ENCODE measurements at regions of chr19 and their contacts with region 1.

Region 1: GRCh38 chr19:10259162-10259905 is 7.3 kb downstream of the MRPL4 start:
- DNase-seq: peak; percentile 96
- H3K4me3 Mint-ChIP-seq: no peak overlapping the region
- H3K27ac Mint-ChIP-seq: peak overlapping the region; percentile 72
- H3K4me1 Mint-ChIP-seq: peaks cover 14% of the 10 kb centered on the region
- H3K27me3 Mint-ChIP-seq: no peaks in the 10 kb centered on the region

Region 2: DNA sequence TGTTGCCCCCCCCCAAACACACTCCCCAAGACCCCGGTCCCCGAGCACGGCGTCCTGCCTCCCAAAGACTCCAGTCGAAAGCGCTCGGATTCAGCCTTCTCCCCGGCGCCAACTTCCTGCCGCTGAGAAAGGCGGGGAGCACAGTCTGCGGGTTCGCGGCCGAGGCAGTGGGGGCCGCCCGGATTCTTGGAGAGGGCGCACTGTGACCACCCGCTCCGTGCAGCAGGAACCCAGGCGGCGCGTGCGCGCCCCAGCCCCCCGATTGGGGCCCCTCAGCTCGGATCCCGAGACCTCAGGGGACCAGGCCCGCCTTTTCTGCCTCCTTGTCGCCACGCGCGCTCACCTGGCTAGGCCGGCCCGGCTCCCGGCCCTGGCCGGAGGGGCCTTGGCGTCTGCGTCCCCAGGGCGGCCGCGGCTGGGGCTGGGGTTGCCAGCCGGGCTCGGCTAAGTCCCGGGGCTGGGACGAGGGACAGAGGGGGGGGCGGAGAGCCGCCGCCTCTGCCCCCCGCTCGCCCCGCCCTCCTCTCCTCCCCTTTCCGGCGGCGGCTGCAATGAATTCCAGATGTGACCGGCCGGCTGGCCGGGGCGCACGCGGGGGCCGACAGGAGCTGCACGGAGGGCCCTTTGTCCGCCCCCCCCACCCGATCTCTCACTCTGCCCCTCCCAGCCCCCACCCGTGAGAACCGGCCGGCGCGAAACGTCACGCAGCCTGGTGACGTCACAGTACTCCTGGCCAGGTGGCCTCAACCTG is 28.3 kb before region 1 on chr19 and contains the start of gene S1PR2:
- CTCF ChIA-PET with region 1: no interaction called
- DNase-seq: peak; percentile 75
- H3K4me3 Mint-ChIP-seq: peak within 1 kb of the TSS; percentile 83
- H3K27ac Mint-ChIP-seq: peak within 1 kb of the TSS; percentile 69
- H3K4me1 Mint-ChIP-seq: peaks cover 23% of the 10 kb centered on the region
- H3K27me3 Mint-ChIP-seq: peaks cover 26% of the 10 kb centered on the region

Region 3: DNA sequence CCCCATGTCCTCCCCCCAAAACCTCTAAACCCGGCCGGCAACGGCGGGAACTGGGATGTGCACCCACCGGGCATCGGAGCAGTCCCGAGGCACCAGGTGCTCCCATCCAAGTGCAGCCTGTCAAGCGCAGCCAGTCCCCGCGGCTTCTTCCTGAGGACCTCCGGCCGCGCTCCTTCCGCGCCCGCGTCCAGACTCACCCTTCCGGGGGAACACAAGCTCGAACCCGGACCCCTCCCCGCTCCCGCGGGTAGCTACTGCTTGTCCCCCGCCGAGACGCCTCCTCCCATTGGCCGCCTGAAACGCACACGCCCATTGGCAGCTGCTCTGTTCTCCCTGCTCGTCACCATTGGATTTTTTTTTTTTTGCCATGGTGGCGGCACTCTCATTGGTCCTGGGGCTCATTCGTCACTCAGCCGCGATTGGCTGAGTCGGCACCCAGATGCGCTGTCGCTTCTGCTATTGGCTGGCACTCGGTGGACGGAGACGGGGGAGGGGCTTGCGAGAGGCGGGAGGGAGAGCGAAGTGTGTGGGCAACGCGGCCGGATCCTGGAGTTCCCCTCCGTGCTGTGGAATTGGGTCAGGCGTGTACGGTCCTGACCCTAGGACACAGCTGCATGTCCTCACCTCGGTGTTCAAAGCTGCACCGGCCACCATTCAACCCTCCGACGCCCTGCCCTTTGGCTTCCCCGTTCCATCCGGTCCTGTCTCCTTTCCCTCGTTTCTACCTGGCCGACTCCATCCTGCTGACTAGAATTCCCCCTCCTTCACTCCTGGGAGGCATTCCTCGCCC is 121.2 kb after region 1 on chr19 and contains the start of gene TYK2:
- CTCF ChIA-PET with region 1: interaction called, 140 read pairs
- DNase-seq: peak; percentile 98
- H3K4me3 Mint-ChIP-seq: peak within 1 kb of the TSS; percentile 84
- H3K27ac Mint-ChIP-seq: peak within 1 kb of the TSS; percentile 90
- H3K4me1 Mint-ChIP-seq: peaks cover 29% of the 10 kb centered on the region
- H3K27me3 Mint-ChIP-seq: peaks cover 16% of the 10 kb centered on the region

Region 4: DNA sequence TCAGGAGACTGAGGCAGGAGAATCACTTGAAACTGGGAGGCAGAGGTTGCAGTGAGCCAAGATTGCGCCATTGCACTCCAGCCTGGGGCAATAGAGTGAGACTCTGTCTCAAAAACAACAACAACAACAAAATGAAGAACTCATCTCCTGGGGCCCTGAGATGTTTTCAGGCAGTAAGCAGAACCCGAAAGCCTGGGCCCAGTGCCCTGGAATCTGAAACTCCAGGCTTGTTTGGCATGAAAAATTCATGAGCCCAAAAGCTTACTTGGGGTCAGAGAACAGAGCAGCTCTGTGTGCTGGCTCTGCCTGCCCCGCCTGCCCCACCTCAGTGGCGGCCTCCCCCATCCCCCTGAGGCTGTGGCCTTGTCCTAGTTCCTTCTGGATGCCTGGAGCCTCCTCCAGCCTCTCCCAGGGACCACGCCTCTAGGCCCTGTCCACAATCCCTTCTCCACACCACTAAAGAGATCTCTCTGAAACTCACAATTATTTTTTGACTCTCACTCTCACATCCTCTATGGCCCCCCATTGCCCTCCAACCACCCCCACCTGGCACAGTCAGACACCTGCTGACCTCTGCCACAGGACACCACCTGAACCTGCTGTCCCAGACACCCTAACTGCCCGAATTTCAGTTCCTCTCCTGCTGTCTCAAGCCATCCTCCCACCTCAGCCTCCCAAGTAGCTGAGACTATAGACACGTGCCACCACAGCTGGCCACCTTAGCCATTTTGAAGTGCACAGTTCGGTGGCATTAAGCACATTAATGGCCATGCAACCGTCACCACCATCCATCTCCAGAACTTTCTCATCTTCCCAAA is 334.7 kb after region 1 on chr19:
- CTCF ChIA-PET with region 1: no interaction called
- DNase-seq: no peak
- H3K4me3 Mint-ChIP-seq: no peak overlapping the region
- H3K27ac Mint-ChIP-seq: peak overlapping the region; percentile 6
- H3K4me1 Mint-ChIP-seq: peaks cover 25% of the 10 kb centered on the region
- H3K27me3 Mint-ChIP-seq: peaks cover 45% of the 10 kb centered on the region